ENCODE measurements at regions of chr10 and their contacts with region 1.

Region 1: GRCh38 chr10:5948999-5949759 is 28.2 kb downstream of the IL15RA start:
- DNase-seq: no peak

Region 2: GRCh38 chr10:5216801-5217200 is 732.4 kb before region 1 on chr10:
- intact Hi-C with region 1: no loop called
- DNase-seq: no peak

Region 3: DNA sequence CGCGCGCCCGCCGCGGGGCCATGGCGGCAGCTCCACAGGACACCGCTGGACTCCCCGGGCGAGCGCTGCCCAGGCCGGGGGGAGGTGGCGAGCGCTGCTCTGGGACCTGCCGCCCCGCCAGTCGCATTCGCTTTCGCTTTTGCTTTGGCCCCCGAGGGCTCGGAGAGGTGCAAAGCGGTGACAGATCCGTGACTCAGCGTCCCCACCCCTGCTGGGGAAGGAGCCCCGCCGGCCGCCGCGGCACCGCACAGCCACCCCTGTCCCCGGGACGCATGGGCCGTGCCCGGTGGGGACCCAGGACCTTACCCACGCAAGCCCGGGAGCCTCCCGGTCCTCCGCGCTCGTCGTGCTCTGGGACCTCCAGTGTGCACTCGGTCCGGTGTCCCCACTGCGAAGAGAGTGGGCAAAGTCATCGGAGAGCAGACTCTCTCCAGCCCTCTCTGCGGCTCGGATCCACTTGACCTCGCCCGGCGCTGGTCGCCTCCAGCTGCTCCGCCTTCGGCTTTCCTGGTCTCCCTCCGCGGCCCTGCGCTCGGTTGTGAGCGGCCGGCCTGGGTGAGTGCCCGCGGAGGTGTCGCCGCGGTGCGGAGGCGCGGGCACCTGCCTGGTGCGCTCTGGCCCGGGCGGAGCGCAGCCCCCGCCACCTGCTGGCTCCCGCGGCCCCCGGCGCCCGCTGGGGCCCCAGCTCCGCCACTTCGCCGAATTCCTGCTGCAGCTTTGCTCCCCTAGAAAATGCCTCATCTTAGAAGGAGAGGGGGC is 28.5 kb after region 1 on chr10 and contains the start of gene IL15RA:
- intact Hi-C with region 1: loop called (anchors 2 kb)
- DNase-seq: peak; percentile 93
- total RNA-seq, gene IL15RA: 3.9 TPM

Region 4: GRCh38 chr10:6014241-6014761 is 65.1 kb after region 1 on chr10:
- intact Hi-C with region 1: loop called (anchors 5 kb)
- DNase-seq: no peak

Region 5: GRCh38 chr10:6050801-6051445 is 101.7 kb after region 1 on chr10:
- intact Hi-C with region 1: loop called (anchors 5 kb)
- DNase-seq: peak; percentile 76

Region 6: GRCh38 chr10:6088721-6089390 is 139.7 kb after region 1 on chr10 and contains the start of gene RBM17:
- intact Hi-C with region 1: loop called (anchors 2 kb)
- DNase-seq: peak; percentile 98
- total RNA-seq, gene RBM17: 70.1 TPM

Measured in cardiac septum (tissue), 1 donor.